Mammary epithelial cell (primary cell): ENCODE measurements at regions of chr10 and their contacts with region 1.

Region 1: DNA sequence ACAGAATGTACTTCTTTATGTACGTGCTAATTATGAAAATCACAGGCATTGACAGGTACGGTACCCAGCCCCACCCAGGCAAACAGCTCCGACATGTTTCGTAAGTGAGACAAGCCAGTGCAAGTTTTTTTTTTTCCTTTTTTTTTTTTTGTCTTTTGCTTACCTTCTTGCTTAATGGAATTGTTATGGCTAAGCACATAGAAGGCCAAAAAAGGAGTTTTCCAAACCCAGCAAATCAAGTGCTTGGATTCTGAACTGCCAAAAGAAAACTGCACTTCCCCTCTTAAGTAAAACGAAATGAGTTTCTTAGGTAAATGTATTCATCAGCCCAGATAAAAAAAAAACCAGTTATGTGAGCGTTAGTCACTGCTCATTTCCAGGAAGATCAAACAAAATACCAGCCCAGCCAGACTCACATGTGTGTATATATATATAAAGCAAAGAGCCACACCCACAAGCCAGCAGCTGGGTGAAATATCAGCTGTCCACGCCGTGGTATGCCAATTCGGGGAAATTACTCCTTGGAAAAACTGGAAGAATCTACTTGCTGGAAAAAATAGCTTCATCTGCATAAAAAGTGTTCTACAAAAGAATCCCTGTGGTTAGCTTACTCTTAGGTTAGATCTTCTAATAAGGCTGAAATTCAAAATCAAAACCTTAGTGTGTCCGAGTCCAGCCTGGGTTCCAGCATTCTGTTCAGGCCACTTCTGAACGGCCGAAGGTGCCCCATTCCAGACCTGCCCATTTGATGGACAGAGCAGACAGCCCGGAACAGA is 8.0 kb downstream of the KLF6 start:
- DNase-seq: peak; percentile 83
- H3K4me3 ChIP-seq: no peak overlapping the region
- H3K27ac ChIP-seq: peak overlapping the region; percentile 69
- H3K4me1 ChIP-seq: peaks cover 49% of the 10 kb centered on the region
- H3K27me3 ChIP-seq: no peaks in the 10 kb centered on the region
- CTCF ChIP-seq: no peak

Region 2: GRCh38 chr10:3197348-3198003 is 579.5 kb before region 1 on chr10:
- CTCF ChIA-PET with region 1: no interaction called
- dilution Hi-C with region 1: no loop called
- in situ Hi-C with region 1: loop called in 1 of 2 experiments (anchors 10 kb)
- intact Hi-C with region 1: loop called (anchors 1 kb)
- DNase-seq: peak; percentile 77
- H3K4me3 ChIP-seq: peak overlapping the region; percentile 28 to 45 (median 30)
- H3K27ac ChIP-seq: no peak overlapping the region
- H3K4me1 ChIP-seq: peaks cover 16% of the 10 kb centered on the region
- H3K27me3 ChIP-seq: peaks cover 12% of the 10 kb centered on the region
- CTCF ChIP-seq: peak; percentile 71 to 98

Region 3: GRCh38 chr10:3239066-3239919 is 537.7 kb before region 1 on chr10:
- CTCF ChIA-PET with region 1: no interaction called
- dilution Hi-C with region 1: no loop called
- in situ Hi-C with region 1: no loop called
- intact Hi-C with region 1: loop called (anchors 1 kb)
- DNase-seq: peak; percentile 26
- H3K4me3 ChIP-seq: no peak overlapping the region
- H3K27ac ChIP-seq: no peak overlapping the region
- H3K4me1 ChIP-seq: no peaks in the 10 kb centered on the region
- H3K27me3 ChIP-seq: no peaks in the 10 kb centered on the region
- CTCF ChIP-seq: peak; percentile 73 to 83

Region 4: DNA sequence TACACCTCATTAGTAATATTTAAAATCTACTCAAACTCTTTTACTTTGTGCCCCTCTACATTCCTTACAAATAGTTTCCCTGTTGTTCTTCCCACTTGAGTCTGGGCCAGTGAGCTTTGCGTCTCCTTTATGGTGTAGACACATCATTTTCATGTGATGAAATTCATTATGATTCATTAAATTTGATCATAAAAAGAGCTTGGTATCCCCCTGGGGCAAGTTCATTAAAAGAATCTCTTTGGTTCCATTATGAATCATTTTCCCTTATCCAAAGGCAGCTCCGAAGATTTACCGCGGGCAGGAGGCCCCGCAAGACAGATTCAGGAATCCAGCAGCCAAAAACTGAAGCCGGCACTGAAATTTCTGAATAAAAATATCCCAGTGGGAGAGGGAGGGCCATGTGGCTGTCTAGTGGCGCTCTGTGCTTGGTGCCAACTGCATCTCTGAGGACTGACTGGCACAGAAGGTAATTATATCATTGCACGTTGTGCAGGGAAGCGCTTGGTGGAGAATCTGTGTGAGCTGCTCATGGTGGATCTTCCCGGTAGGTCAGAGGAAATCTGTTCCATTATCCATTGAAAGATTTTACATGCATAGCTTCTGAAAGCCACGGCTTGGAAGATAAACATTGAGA is 453.0 kb before region 1 on chr10:
- CTCF ChIA-PET with region 1: no interaction called
- dilution Hi-C with region 1: no loop called
- in situ Hi-C with region 1: no loop called
- intact Hi-C with region 1: loop called (anchors 10 kb)
- DNase-seq: peak; percentile 85
- H3K4me3 ChIP-seq: no peak overlapping the region
- H3K27ac ChIP-seq: no peak overlapping the region
- H3K4me1 ChIP-seq: peaks cover 12% of the 10 kb centered on the region
- H3K27me3 ChIP-seq: no peaks in the 10 kb centered on the region
- CTCF ChIP-seq: no peak

Region 5: GRCh38 chr10:3398825-3399646 is 377.9 kb before region 1 on chr10:
- CTCF ChIA-PET with region 1: no interaction called
- dilution Hi-C with region 1: no loop called
- in situ Hi-C with region 1: no loop called
- intact Hi-C with region 1: loop called (anchors 5 kb)
- DNase-seq: peak; percentile 76
- H3K4me3 ChIP-seq: no peak overlapping the region
- H3K27ac ChIP-seq: no peak overlapping the region
- H3K4me1 ChIP-seq: peaks cover 6% of the 10 kb centered on the region
- H3K27me3 ChIP-seq: peaks cover 2% of the 10 kb centered on the region
- CTCF ChIP-seq: no peak

Region 6: DNA sequence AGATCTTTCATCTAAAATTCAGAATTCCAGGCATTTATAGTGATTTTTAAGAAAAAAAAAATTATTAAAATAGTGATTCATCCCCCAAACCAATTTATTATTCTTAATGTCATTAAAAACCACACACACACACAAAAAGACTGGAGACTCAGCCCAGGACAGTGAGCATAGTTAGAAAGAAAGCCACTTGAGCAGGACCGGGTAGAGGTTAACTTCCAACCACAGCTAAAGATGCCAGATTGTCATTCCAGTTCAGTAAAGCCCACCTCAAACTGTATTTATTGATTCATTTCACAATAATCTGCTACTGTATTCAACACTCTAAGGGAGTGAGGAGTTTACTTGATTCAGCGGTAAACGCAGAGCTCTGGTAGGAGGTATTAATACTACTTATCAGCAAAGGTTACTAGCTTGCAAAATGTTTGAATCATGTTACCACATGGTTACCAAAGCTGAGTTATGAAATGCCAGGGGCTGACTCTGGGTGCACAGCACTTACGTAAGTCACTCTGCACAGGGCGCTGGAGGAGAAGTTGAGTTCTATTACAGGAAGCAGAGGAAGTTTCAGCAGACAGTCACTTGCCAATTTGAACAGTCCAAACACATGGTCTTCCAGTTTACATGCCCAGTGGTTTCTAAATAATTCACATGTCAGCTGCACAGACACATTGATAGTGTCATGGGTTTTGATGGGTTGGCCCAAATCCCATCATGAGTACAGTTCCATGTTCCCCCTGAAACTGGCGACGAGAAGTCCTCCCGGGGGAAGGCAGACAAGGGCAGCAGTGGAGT is 56.6 kb before region 1 on chr10:
- CTCF ChIA-PET with region 1: no interaction called
- dilution Hi-C with region 1: no loop called
- in situ Hi-C with region 1: no loop called
- intact Hi-C with region 1: no loop called
- DNase-seq: peak; percentile 75
- H3K4me3 ChIP-seq: no peak overlapping the region
- H3K27ac ChIP-seq: no peak overlapping the region
- H3K4me1 ChIP-seq: no peaks in the 10 kb centered on the region
- H3K27me3 ChIP-seq: no peaks in the 10 kb centered on the region
- CTCF ChIP-seq: no peak

Region 7: GRCh38 chr10:3740157-3740871 is 36.7 kb before region 1 on chr10:
- CTCF ChIA-PET with region 1: no interaction called
- dilution Hi-C with region 1: no loop called
- in situ Hi-C with region 1: no loop called
- intact Hi-C with region 1: loop called (anchors 1 kb)
- DNase-seq: peak; percentile 95
- H3K4me3 ChIP-seq: no peak overlapping the region
- H3K27ac ChIP-seq: peak overlapping the region; percentile 81
- H3K4me1 ChIP-seq: peaks cover 22% of the 10 kb centered on the region
- H3K27me3 ChIP-seq: no peaks in the 10 kb centered on the region
- CTCF ChIP-seq: no peak

Region 8: DNA sequence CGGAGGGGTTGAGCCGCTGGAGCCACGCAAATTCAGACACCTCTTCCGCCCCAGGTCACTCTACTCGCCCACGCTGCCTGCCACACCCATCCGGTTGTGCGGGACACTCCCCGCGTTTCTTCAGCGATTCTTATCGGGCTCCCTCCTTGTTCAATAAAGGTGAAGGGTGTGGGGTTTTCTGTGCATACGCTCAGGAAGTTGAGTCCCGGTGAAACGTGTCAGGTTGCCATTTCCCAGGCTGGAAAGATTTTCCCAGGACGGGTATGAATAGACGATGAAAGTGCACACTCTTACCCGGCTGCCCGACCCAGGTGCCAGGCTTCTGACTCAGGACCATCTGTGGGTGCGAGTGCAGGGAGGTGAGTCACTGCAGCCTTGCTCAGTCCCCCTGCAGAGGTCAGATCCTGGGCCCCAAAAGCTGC is 13.9 kb before region 1 on chr10:
- CTCF ChIA-PET with region 1: no interaction called
- dilution Hi-C with region 1: no loop called
- in situ Hi-C with region 1: no loop called
- intact Hi-C with region 1: loop called (anchors 1 kb)
- DNase-seq: peak; percentile 99
- H3K4me3 ChIP-seq: no peak overlapping the region
- H3K27ac ChIP-seq: peak overlapping the region; percentile 94
- H3K4me1 ChIP-seq: peaks cover 60% of the 10 kb centered on the region
- H3K27me3 ChIP-seq: no peaks in the 10 kb centered on the region
- CTCF ChIP-seq: no peak